AG04450 (cell line): ENCODE measurements at regions of chr1 and their contacts with region 1.

Region 1: DNA sequence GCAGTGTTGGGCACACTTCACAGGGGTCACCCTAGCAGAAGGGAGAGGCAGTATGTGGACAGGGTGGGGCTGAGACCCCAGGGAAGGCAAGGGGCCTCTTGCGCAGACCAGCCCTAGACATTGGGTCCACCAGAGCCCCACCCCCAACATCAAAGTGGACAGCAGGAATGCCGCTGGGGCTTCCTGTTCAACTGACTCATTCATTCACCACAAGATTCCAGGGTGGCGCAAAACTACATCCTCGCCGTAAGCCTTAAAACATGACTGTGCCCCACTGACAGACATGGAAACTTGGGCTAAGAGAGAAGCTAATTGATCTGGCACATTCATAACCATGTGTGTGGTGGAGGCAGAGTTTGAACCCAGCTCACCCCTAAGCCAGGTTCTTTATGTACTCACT is 14.0 kb downstream of the COL16A1 start:
- DNase-seq: peak; percentile 85
- H3K4me3 ChIP-seq: no peak overlapping the region
- H3K27ac ChIP-seq: peak overlapping the region; percentile 93
- H3K27me3 ChIP-seq: no peaks in the 10 kb centered on the region
- CTCF ChIP-seq: no peak

Region 2: GRCh38 chr1:31705080-31705866 is 15.5 kb after region 1 on chr1:
- CTCF ChIA-PET with region 1: interaction called, 4 read pairs
- POLR2A ChIA-PET with region 1: interaction called, 15 read pairs
- DNase-seq: no peak
- H3K4me3 ChIP-seq: peak overlapping the region; percentile 81
- H3K27ac ChIP-seq: peak overlapping the region; percentile 78
- H3K27me3 ChIP-seq: no peaks in the 10 kb centered on the region
- CTCF ChIP-seq: peak; percentile 40

Region 3: GRCh38 chr1:31866450-31867032 is 176.7 kb after region 1 on chr1:
- CTCF ChIA-PET with region 1: no interaction called
- POLR2A ChIA-PET with region 1: no interaction called
- DNase-seq: no peak
- H3K4me3 ChIP-seq: no peak overlapping the region
- H3K27ac ChIP-seq: no peak overlapping the region
- H3K27me3 ChIP-seq: peaks cover 2% of the 10 kb centered on the region
- CTCF ChIP-seq: no peak

Region 4: GRCh38 chr1:31977385-31978131 is 287.7 kb after region 1 on chr1:
- CTCF ChIA-PET with region 1: no interaction called
- POLR2A ChIA-PET with region 1: no interaction called
- DNase-seq: peak; percentile 20
- H3K4me3 ChIP-seq: no peak overlapping the region
- H3K27ac ChIP-seq: peak overlapping the region; percentile 34
- H3K27me3 ChIP-seq: no peaks in the 10 kb centered on the region
- CTCF ChIP-seq: peak; percentile 46